B cell (primary cell): ENCODE measurements at regions of chr6 and their contacts with region 1.

Region 1: GRCh38 chr6:149342525-149342924 is 25.0 kb downstream of the TAB2 start:
- DNase-seq: peak; percentile 35
- ATAC-seq: peak; percentile 47
- H3K4me3 ChIP-seq: no peak overlapping the region
- H3K4me3 Mint-ChIP-seq: peak overlapping the region; percentile 9
- H3K27ac ChIP-seq: peak overlapping the region; percentile 27 to 43
- H3K27ac Mint-ChIP-seq: peak overlapping the region; percentile 8
- H3K4me1 ChIP-seq: peaks cover 12 to 35% of the 10 kb centered on the region in 2 donors
- H3K4me1 Mint-ChIP-seq: peaks cover 62% of the 10 kb centered on the region
- H3K27me3 ChIP-seq: no peaks in the 10 kb centered on the region
- H3K27me3 Mint-ChIP-seq: no peaks in the 10 kb centered on the region
- CTCF ChIP-seq: no peak

Region 2: DNA sequence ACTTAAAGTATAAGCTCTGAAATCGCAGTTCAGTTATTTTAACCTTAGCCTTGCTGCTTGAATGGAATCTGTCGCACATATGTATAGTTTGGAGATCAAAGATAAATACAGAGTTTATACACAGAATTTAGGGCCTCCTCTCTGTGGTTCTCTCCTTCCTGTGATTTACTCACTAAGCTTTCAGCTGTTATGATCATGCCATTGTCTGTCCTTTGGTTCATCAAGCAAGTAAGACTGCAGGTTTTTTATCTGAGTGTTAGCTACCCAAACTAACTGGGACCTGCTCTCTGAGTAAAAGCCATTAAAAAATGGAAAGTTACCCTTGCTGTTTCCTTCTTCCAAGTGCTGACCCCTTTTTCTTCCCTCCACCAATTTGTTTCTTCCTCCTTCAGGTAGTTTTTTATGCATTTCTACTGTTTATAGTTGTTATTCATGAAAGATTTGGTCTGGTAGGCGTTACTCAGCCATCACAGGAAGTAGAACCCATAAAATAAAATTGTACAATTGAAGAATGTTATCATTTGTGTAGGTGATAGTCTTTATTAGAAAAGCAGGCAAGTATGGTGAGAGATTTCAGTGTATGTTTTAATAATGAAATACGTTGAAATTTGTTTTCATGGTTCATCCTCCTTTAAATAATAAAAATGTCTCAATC is 23.9 kb after region 1 on chr6:
- CTCF ChIA-PET with region 1: no interaction called
- POLR2A ChIA-PET with region 1: no interaction called
- intact Hi-C with region 1: loop called (anchors 1 kb)
- DNase-seq: peak; percentile 19
- ATAC-seq: no peak
- H3K4me3 ChIP-seq: no peak overlapping the region
- H3K4me3 Mint-ChIP-seq: no peak overlapping the region
- H3K27ac ChIP-seq: peak overlapping the region in 1 of 2 donors; percentile 72
- H3K27ac Mint-ChIP-seq: no peak overlapping the region
- H3K4me1 ChIP-seq: peaks cover 24 to 39% of the 10 kb centered on the region in 2 donors
- H3K4me1 Mint-ChIP-seq: peaks cover 39% of the 10 kb centered on the region
- H3K27me3 ChIP-seq: no peaks in the 10 kb centered on the region
- H3K27me3 Mint-ChIP-seq: no peaks in the 10 kb centered on the region
- CTCF ChIP-seq: no peak